ENCODE measurements at regions of chr3 and their contacts with region 1.

Region 1: DNA sequence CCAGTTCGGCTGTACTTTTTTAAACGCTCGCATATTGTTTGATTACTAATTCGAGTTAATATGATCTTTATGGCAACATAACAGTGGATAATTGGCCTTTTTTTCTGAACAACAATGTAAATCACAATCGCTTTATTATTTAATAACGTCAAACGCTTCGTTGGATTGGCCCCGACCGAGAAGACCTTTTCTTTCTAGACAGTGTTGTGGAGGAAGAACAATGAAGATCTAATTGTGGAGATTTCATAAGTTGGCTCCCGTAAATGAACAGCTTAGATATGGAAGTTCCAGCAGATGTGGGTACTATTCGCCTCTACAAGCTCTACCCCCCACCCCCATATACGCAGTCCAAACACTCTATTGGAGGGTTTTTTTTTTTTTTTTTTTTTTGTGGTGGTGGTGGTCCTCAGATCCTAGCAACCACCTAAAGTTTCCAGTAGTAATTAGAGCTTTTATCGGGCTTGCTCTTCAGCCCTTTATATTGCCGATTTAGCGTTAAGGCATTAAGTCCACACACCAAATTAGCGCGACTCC is 12.8 kb downstream of the SOX2 start:
- DNase-seq: no peak
- H3K4me3 Mint-ChIP-seq: no peak overlapping the region
- H3K27ac Mint-ChIP-seq: no peak overlapping the region
- H3K4me1 Mint-ChIP-seq: no peaks in the 10 kb centered on the region
- H3K27me3 Mint-ChIP-seq: peaks cover 86% of the 10 kb centered on the region
- CTCF ChIP-seq: no peak

Region 2: GRCh38 chr3:181790561-181790960 is 66.1 kb after region 1 on chr3:
- CTCF ChIA-PET with region 1: interaction called, 15 read pairs
- intact Hi-C with region 1: no loop called
- DNase-seq: no peak
- H3K4me3 Mint-ChIP-seq: no peak overlapping the region
- H3K27ac Mint-ChIP-seq: no peak overlapping the region
- H3K4me1 Mint-ChIP-seq: no peaks in the 10 kb centered on the region
- H3K27me3 Mint-ChIP-seq: no peaks in the 10 kb centered on the region
- CTCF ChIP-seq: no peak

Region 3: GRCh38 chr3:181886676-181887075 is 162.2 kb after region 1 on chr3:
- CTCF ChIA-PET with region 1: no interaction called
- intact Hi-C with region 1: no loop called
- DNase-seq: no peak
- H3K4me3 Mint-ChIP-seq: no peak overlapping the region
- H3K27ac Mint-ChIP-seq: no peak overlapping the region
- H3K4me1 Mint-ChIP-seq: no peaks in the 10 kb centered on the region
- H3K27me3 Mint-ChIP-seq: no peaks in the 10 kb centered on the region
- CTCF ChIP-seq: no peak

Region 4: GRCh38 chr3:182258538-182259177 is 534.2 kb after region 1 on chr3:
- CTCF ChIA-PET with region 1: no interaction called
- intact Hi-C with region 1: no loop called
- DNase-seq: peak; percentile 50
- H3K4me3 Mint-ChIP-seq: no peak overlapping the region
- H3K27ac Mint-ChIP-seq: no peak overlapping the region
- H3K4me1 Mint-ChIP-seq: peaks cover 17% of the 10 kb centered on the region
- H3K27me3 Mint-ChIP-seq: no peaks in the 10 kb centered on the region
- CTCF ChIP-seq: peak; percentile 62

Region 5: GRCh38 chr3:183158551-183159006 is 1434.1 kb after region 1 on chr3:
- CTCF ChIA-PET with region 1: no interaction called
- intact Hi-C with region 1: no loop called
- DNase-seq: no peak
- H3K4me3 Mint-ChIP-seq: no peak overlapping the region
- H3K27ac Mint-ChIP-seq: no peak overlapping the region
- H3K4me1 Mint-ChIP-seq: peaks cover 21% of the 10 kb centered on the region
- H3K27me3 Mint-ChIP-seq: no peaks in the 10 kb centered on the region
- CTCF ChIP-seq: no peak